Activated naive CD4-positive, alpha-beta T cell treated with anti-CD3 and anti-CD28 coated beads for 36 hours (primary cell): ENCODE measurements at regions of chr19 and their contacts with region 1.

Region 1: DNA sequence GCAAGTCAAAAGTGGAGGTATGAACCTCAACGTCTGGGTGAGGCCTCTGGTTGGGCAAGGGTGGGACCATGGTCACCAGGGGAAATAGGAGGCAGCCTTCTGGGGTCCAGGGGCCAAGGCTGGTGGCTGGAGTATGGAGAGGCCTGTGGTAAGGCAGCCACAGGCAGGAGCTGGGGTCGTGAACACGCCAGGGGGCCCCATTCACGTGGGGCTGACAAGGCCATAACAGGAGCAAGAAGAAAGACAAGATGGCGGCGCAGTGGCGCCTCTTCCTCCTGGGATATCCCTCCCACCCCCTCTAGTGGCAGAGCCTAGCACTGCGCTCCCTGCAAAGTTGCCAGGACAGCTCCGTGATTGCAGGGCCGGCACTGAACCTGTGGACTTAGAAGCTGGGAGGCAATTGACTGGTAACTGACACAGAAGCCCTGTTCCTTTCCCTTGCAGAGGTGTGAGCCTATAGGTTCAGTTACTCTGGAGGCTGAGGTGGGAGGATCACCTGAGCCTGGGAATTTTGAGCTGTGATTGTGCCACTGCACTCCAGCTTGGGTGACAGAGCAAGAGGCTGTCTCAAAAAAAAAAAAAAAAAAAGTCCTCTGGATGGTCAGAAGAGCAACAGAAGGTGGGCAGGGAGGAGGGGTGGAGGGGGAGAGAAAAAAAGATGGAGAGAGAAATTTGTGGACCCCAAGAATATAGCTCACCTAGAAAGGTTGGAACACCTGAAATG is 19.7 kb upstream of the EDDM13 start:
- DNase-seq: peak; percentile 87
- H3K4me3 Mint-ChIP-seq: no peak overlapping the region
- H3K27ac Mint-ChIP-seq: no peak overlapping the region
- H3K4me1 Mint-ChIP-seq: peaks cover 3% of the 10 kb centered on the region
- H3K27me3 Mint-ChIP-seq: no peaks in the 10 kb centered on the region

Region 2: DNA sequence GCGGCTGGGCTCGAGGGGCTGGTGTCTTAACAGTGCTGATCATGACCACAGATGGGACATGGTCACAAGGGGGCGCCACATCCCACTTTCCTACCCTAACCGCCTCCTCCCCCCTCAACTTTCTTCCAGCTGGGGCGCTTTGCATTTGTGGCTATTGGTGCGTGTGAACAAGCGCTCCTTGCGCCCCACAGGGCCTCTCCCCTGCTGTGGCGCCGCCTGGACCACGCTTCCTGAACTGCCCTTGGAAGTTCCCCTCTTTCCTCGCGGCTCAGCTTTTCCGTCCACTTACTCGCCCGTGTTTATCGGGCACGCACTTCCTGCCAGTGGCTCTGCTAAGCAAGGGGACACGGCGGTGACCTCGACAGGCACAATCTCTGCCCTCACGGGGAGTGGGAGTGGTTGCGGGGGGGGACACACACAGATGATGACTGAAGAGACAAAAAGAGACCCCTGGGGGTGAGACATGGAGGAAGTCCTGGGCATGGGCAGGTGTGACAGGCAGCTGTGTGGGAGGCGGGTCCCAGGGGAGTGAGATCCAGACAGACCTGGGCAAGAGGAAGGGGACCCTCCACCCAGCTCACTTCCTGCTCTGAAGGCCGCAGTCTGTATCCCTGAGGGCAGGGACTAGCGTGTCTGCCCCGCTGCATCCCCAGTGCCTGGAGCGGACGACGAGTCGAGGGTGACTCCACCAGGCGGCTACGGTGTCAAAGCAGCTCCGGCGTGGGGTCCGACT is 172.0 kb before region 1 on chr19:
- CTCF ChIA-PET with region 1: interaction called, 4 read pairs
- intact Hi-C with region 1: loop called (anchors 5 kb)
- DNase-seq: peak; percentile 84
- H3K4me3 Mint-ChIP-seq: peak overlapping the region; percentile 41
- H3K27ac Mint-ChIP-seq: no peak overlapping the region
- H3K4me1 Mint-ChIP-seq: peaks cover 10% of the 10 kb centered on the region
- H3K27me3 Mint-ChIP-seq: peaks cover 17% of the 10 kb centered on the region

Region 3: GRCh38 chr19:56199686-56200085 is 53.2 kb before region 1 on chr19:
- CTCF ChIA-PET with region 1: no interaction called
- intact Hi-C with region 1: no loop called
- DNase-seq: no peak
- H3K4me3 Mint-ChIP-seq: no peak overlapping the region
- H3K27ac Mint-ChIP-seq: no peak overlapping the region
- H3K4me1 Mint-ChIP-seq: no peaks in the 10 kb centered on the region
- H3K27me3 Mint-ChIP-seq: peaks cover 2% of the 10 kb centered on the region

Region 4: GRCh38 chr19:56266051-56266450 is 13.2 kb after region 1 on chr19:
- CTCF ChIA-PET with region 1: interaction called, 24 read pairs
- intact Hi-C with region 1: no loop called
- DNase-seq: no peak
- H3K4me3 Mint-ChIP-seq: no peak overlapping the region
- H3K27ac Mint-ChIP-seq: no peak overlapping the region
- H3K4me1 Mint-ChIP-seq: no peaks in the 10 kb centered on the region
- H3K27me3 Mint-ChIP-seq: no peaks in the 10 kb centered on the region

Region 5: DNA sequence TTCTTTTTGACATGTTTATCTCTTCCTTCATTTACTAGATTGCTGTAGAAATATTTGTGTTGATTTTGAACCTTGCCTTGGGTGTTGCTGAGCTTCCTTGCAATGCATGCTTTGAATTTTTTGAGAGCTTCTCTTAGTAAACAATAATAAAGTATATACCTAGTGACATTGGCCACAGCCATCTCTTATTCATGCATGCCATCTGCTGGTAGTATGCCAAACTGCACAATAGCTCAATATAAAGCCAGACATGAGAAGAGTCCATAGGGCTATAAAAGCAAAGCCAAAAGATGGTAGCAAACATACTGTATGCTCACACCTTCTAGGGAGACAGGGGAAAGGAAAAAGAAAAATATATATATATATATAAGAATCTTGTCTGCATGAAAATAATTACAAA is 80.6 kb after region 1 on chr19:
- CTCF ChIA-PET with region 1: interaction called, 40 read pairs
- intact Hi-C with region 1: loop called (anchors 1 kb)
- DNase-seq: peak; percentile 66
- H3K4me3 Mint-ChIP-seq: no peak overlapping the region
- H3K27ac Mint-ChIP-seq: no peak overlapping the region
- H3K4me1 Mint-ChIP-seq: no peaks in the 10 kb centered on the region
- H3K27me3 Mint-ChIP-seq: no peaks in the 10 kb centered on the region

Region 6: GRCh38 chr19:56350416-56351045 is 97.7 kb after region 1 on chr19:
- CTCF ChIA-PET with region 1: interaction called, 12 read pairs
- intact Hi-C with region 1: loop called (anchors 1 kb)
- DNase-seq: peak; percentile 77
- H3K4me3 Mint-ChIP-seq: no peak overlapping the region
- H3K27ac Mint-ChIP-seq: no peak overlapping the region
- H3K4me1 Mint-ChIP-seq: no peaks in the 10 kb centered on the region
- H3K27me3 Mint-ChIP-seq: no peaks in the 10 kb centered on the region

Region 7: GRCh38 chr19:56477429-56478338 is 224.8 kb after region 1 on chr19:
- CTCF ChIA-PET with region 1: no interaction called
- intact Hi-C with region 1: no loop called
- DNase-seq: peak; percentile 61
- H3K4me3 Mint-ChIP-seq: peak overlapping the region; percentile 85
- H3K27ac Mint-ChIP-seq: peak overlapping the region; percentile 70
- H3K4me1 Mint-ChIP-seq: peaks cover 16% of the 10 kb centered on the region
- H3K27me3 Mint-ChIP-seq: peaks cover 45% of the 10 kb centered on the region